K562 (cell line): ENCODE measurements at regions of chr1 and their contacts with region 1.

Region 1: GRCh38 chr1:31663622-31664452 is 19.2 kb upstream of the PEF1 start:
- DNase-seq: peak; percentile 70 to 91 (median 88)
- ATAC-seq: peak; percentile 79
- H3K4me3 ChIP-seq: no peak overlapping the region
- H3K27ac ChIP-seq: no peak overlapping the region
- H3K4me1 ChIP-seq: peaks cover 0 to 9% of the 10 kb centered on the region in 2 experiments; a peak in 1 of 5 replicates
- H3K27me3 ChIP-seq: peaks cover 14 to 78% of the 10 kb centered on the region in 2 experiments; a peak in 4 of 5 replicates
- CTCF ChIP-seq: peak; percentile 92 to 97 (median 94)
- EP300 ChIP-seq: 0 out of 2 replicates have a peak, but pooled peaks have one; percentile 27
- POLR2A ChIP-seq: no peak
- RAD21 ChIP-seq: peak; percentile 93 to 97

Region 2: GRCh38 chr1:31501215-31501904 is 162.5 kb before region 1 on chr1:
- CTCF ChIA-PET with region 1: no interaction called
- POLR2A ChIA-PET with region 1: no interaction called
- in situ Hi-C with region 1: no loop called
- intact Hi-C with region 1: no loop called
- DNase-seq: no peak
- ATAC-seq: peak; percentile 70
- H3K4me3 ChIP-seq: no peak overlapping the region
- H3K27ac ChIP-seq: no peak overlapping the region
- H3K4me1 ChIP-seq: peaks cover 0 to 7% of the 10 kb centered on the region in 2 experiments; a peak in 2 of 5 replicates
- H3K27me3 ChIP-seq: peaks cover 27 to 66% of the 10 kb centered on the region in 2 experiments
- CTCF ChIP-seq: peak; percentile 6 to 28 (median 11); a peak in 1 of 6 replicates
- EP300 ChIP-seq: no peak
- POLR2A ChIP-seq: no peak
- RAD21 ChIP-seq: no peak

Region 3: GRCh38 chr1:31644560-31645273 is 19.1 kb before region 1 on chr1 and contains the start of gene PEF1:
- CTCF ChIA-PET with region 1: no interaction called
- POLR2A ChIA-PET with region 1: interaction called, 11 read pairs
- in situ Hi-C with region 1: no loop called
- intact Hi-C with region 1: no loop called
- DNase-seq: peak; percentile 99 to 100 (median 100)
- ATAC-seq: peak; percentile 91
- H3K4me3 ChIP-seq: peak within 1 kb of the TSS; percentile 62
- H3K27ac ChIP-seq: peak within 1 kb of the TSS; percentile 96
- H3K4me1 ChIP-seq: peaks cover 0 to 13% of the 10 kb centered on the region in 2 experiments; a peak in 3 of 5 replicates
- H3K27me3 ChIP-seq: 0 out of 5 replicates have a peak, but pooled peaks cover 0 to under 1% of the 10 kb centered on the region in 2 experiments
- CTCF ChIP-seq: no peak
- EP300 ChIP-seq: 0 out of 2 replicates have a peak, but pooled peaks have one; percentile 6
- POLR2A ChIP-seq: peak; percentile 91
- RAD21 ChIP-seq: no peak
- polyA plus RNA-seq, gene PEF1: 26.3 to 33.0 TPM

Region 4: GRCh38 chr1:31705080-31705866 is 41.4 kb after region 1 on chr1:
- CTCF ChIA-PET with region 1: interaction called, 6 read pairs
- POLR2A ChIA-PET with region 1: no interaction called
- in situ Hi-C with region 1: no loop called
- intact Hi-C with region 1: loop called (anchors 2 kb)
- DNase-seq: peak; percentile 88 to 94 (median 93)
- ATAC-seq: peak; percentile 95
- H3K4me3 ChIP-seq: no peak overlapping the region
- H3K27ac ChIP-seq: peak overlapping the region; percentile 29; the same call in 2 of the 3 replicates
- H3K4me1 ChIP-seq: peaks cover 14 to 27% of the 10 kb centered on the region in 2 experiments
- H3K27me3 ChIP-seq: peaks cover 16 to 56% of the 10 kb centered on the region in 2 experiments
- CTCF ChIP-seq: peak; percentile 61 to 85 (median 75)
- EP300 ChIP-seq: peak; percentile 35; the same call in 1 of the 2 replicates
- POLR2A ChIP-seq: no peak
- RAD21 ChIP-seq: peak; percentile 45 to 89

Region 5: GRCh38 chr1:31745096-31745945 is 81.5 kb after region 1 on chr1:
- CTCF ChIA-PET with region 1: interaction called, 27 read pairs
- POLR2A ChIA-PET with region 1: interaction called, 5 read pairs
- in situ Hi-C with region 1: loop called (anchors 5 kb)
- intact Hi-C with region 1: loop called (anchors 1 kb)
- DNase-seq: peak; percentile 86 to 94 (median 92)
- ATAC-seq: peak; percentile 95
- H3K4me3 ChIP-seq: no peak overlapping the region
- H3K27ac ChIP-seq: no peak overlapping the region
- H3K4me1 ChIP-seq: peaks cover 5 to 47% of the 10 kb centered on the region in 2 experiments; a peak in 4 of 5 replicates
- H3K27me3 ChIP-seq: peaks cover 0 to 24% of the 10 kb centered on the region in 2 experiments
- CTCF ChIP-seq: peak; percentile 94 to 98 (median 95)
- EP300 ChIP-seq: no peak
- POLR2A ChIP-seq: no peak
- RAD21 ChIP-seq: peak; percentile 73 to 91

Region 6: GRCh38 chr1:31789259-31790065 is 125.6 kb after region 1 on chr1:
- CTCF ChIA-PET with region 1: interaction called, 46 read pairs
- POLR2A ChIA-PET with region 1: interaction called, 4 read pairs
- in situ Hi-C with region 1: no loop called
- intact Hi-C with region 1: loop called (anchors 1 kb)
- DNase-seq: peak; percentile 95 to 99 (median 98)
- ATAC-seq: peak; percentile 91
- H3K4me3 ChIP-seq: peak overlapping the region; percentile 57
- H3K27ac ChIP-seq: no peak overlapping the region
- H3K4me1 ChIP-seq: peaks cover 9 to 29% of the 10 kb centered on the region in 2 experiments; a peak in 4 of 5 replicates
- H3K27me3 ChIP-seq: peaks cover 16 to 44% of the 10 kb centered on the region in 2 experiments
- CTCF ChIP-seq: peak; percentile 92 to 99 (median 99)
- EP300 ChIP-seq: peak; percentile 19; the same call in 1 of the 2 replicates
- POLR2A ChIP-seq: no peak
- RAD21 ChIP-seq: peak; percentile 98

Region 7: DNA sequence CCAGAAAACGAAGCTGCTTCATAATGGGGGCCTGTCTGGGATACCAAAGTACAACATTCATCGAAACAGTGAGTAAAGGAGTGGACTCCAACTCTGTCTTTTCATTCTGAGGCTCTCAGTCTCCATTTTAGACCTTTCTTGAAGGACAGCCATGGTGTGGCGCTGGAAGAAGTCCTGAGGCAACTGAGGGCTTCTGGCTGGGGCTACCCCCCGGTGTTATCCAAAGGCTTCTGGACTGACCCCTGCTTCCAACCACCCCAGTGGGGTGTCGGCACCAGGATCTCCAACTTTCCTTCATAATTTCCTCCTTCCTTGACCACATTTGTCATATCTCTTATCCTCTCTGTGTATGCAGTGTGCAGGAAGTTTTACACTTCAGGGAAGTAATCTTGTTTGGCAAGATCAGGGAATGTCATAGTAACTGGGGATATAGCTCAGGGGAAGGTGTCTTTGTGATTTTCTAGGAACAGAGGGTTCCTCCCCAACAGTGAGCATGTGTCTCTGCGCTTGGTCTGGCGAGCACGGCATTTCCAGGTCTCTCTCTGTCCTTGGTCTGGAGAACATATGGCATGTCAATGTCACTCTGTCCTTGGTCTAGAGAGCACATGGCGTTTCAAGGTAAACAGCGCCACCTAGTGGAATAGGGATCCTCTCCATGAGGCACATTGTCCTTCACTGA is 749.8 kb after region 1 on chr1:
- CTCF ChIA-PET with region 1: interaction called, 3 read pairs
- POLR2A ChIA-PET with region 1: no interaction called
- in situ Hi-C with region 1: no loop called
- intact Hi-C with region 1: loop called (anchors 5 kb)
- DNase-seq: peak; percentile 80 to 96 (median 82)
- ATAC-seq: peak; percentile 99
- H3K4me3 ChIP-seq: no peak overlapping the region
- H3K27ac ChIP-seq: peak overlapping the region; percentile 69
- H3K4me1 ChIP-seq: peaks cover 0 to 7% of the 10 kb centered on the region in 2 experiments; a peak in 3 of 5 replicates
- H3K27me3 ChIP-seq: no peaks in the 10 kb centered on the region
- CTCF ChIP-seq: peak; percentile 87 to 98 (median 93)
- EP300 ChIP-seq: no peak
- POLR2A ChIP-seq: no peak
- RAD21 ChIP-seq: peak; percentile 93 to 99